Heart left ventricle (tissue), 16 donors: ENCODE measurements at regions of chr5 and their contacts with region 1.

Region 1: DNA sequence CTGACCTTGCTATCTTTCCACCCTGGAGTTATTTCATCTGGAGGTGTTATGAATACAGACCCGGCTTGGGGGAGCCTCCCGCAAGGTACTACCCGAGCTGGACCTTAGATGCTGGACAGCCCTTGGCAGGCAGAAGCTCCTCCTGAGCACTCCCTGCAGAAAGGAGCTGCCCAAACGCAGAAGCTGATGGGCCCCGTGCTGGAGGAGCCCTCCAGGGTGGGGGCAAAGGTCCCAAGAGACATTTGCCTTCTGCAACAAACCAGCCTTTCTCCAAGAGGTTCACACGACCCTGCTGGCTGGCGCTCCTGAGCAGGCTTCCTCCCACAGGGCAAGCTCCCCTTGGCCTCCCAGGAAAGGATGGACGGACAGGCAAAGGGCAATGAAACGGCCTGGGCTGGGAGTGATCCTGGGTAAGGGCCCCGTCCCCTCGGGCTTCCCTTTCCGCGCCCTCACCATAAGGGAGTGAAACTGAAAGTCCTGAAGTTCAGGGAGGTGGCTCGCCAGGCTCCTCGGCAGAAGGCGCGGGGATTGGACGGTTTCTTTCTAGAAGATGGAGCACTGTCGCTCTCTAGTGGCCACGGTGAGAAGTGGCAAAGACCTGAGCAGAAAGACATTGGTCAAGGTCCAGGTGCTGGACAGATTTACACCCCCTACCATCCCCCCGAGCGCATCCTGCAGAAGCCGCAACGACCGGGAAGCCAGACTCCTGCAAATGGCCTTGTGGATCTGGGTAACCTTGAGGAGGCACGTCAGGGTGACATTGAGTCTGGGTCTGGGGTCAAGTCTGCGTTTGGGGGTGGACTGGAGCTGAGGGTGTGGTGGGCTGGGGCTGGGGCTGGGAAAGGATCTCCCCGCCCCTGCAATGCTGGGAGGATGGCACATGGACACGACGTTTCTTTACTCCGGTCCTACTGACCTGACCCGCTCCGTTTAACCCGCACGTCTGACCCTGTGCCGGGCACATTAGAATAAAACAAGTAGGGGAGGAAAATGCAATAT is 56.4 kb downstream of the NEURL1B start:
- DNase-seq: peak; percentile 91 to 94 (median 92)
- ATAC-seq: peak; percentile 63 to 78 (median 68)
- H3K4me3 ChIP-seq: peak overlapping the region; percentile 21 to 70 (median 62)
- H3K27ac ChIP-seq: peak overlapping the region; percentile 53 to 94 (median 89)
- H3K4me1 ChIP-seq: peaks cover 5 to 74% (median 65%) of the 10 kb centered on the region in 12 donors
- H3K27me3 ChIP-seq: no peaks in the 10 kb centered on the region
- CTCF ChIP-seq: peak; percentile 80 to 96 (median 92)
- POLR2A ChIP-seq: peak in 1 of 2 donors; percentile 49

Region 2: GRCh38 chr5:172106511-172107356 is 590.7 kb before region 1 on chr5:
- intact Hi-C with region 1: loop called in 2 of 10 experiments (anchors 5 to 10 kb)
- DNase-seq: peak in 4 of 5 donors; percentile 42 to 82 (median 58)
- ATAC-seq: peak in 3 of 4 donors; percentile 21 to 27 (median 26)
- H3K4me3 ChIP-seq: peak overlapping the region in 9 of 12 donors; percentile 9 to 46 (median 29)
- H3K27ac ChIP-seq: peak overlapping the region in 1 of 12 donors; percentile 32
- H3K4me1 ChIP-seq: peaks cover 2 to 83% (median 55%) of the 10 kb centered on the region in 12 donors
- H3K27me3 ChIP-seq: no peaks in the 10 kb centered on the region
- CTCF ChIP-seq: peak; percentile 84 to 99 (median 90)
- POLR2A ChIP-seq: no peak

Region 3: GRCh38 chr5:172479044-172479783 is 218.2 kb before region 1 on chr5:
- intact Hi-C with region 1: loop called (anchors 1 to 2 kb)
- DNase-seq: peak; percentile 88 to 93 (median 89)
- ATAC-seq: peak; percentile 88 to 97 (median 96)
- H3K4me3 ChIP-seq: peak overlapping the region in 7 of 12 donors; percentile 8 to 39 (median 23)
- H3K27ac ChIP-seq: peak overlapping the region in 11 of 12 donors; percentile 31 to 81 (median 72)
- H3K4me1 ChIP-seq: peaks cover 0 to 27% (median 12%) of the 10 kb centered on the region in 12 donors
- H3K27me3 ChIP-seq: no peaks in the 10 kb centered on the region
- CTCF ChIP-seq: peak; percentile 75 to 97 (median 89)
- POLR2A ChIP-seq: no peak

Region 4: GRCh38 chr5:172583931-172584511 is 113.4 kb before region 1 on chr5:
- intact Hi-C with region 1: loop called in 3 of 10 experiments (anchors 5 to 10 kb)
- DNase-seq: peak; percentile 73 to 80 (median 79)
- ATAC-seq: peak; percentile 81 to 89 (median 86)
- H3K4me3 ChIP-seq: no peak overlapping the region
- H3K27ac ChIP-seq: peak overlapping the region; percentile 73 to 97 (median 87)
- H3K4me1 ChIP-seq: peaks cover 0 to 79% (median 49%) of the 10 kb centered on the region in 12 donors
- H3K27me3 ChIP-seq: no peaks in the 10 kb centered on the region
- CTCF ChIP-seq: no peak
- POLR2A ChIP-seq: no peak

Region 5: GRCh38 chr5:172640822-172641358 is 56.5 kb before region 1 on chr5 and contains the start of gene NEURL1B:
- intact Hi-C with region 1: loop called in 9 of 10 experiments (anchors 2 to 10 kb)
- DNase-seq: peak; percentile 81 to 91 (median 89)
- ATAC-seq: peak; percentile 68 to 88 (median 82)
- H3K4me3 ChIP-seq: peak within 1 kb of the TSS; percentile 73 to 98 (median 88)
- H3K27ac ChIP-seq: peak within 1 kb of the TSS; percentile 93 to 99 (median 98)
- H3K4me1 ChIP-seq: peaks cover 0 to 50% (median 26%) of the 10 kb centered on the region in 12 donors
- H3K27me3 ChIP-seq: peaks cover 0 to 11% (median 0%) of the 10 kb centered on the region in 9 donors
- CTCF ChIP-seq: peak in 7 of 12 donors; percentile 5 to 53 (median 29)
- POLR2A ChIP-seq: peak in 1 of 2 donors; percentile 59
- total RNA-seq, gene NEURL1B: 16.1 to 47.1 (median 25.8) TPM

Region 6: DNA sequence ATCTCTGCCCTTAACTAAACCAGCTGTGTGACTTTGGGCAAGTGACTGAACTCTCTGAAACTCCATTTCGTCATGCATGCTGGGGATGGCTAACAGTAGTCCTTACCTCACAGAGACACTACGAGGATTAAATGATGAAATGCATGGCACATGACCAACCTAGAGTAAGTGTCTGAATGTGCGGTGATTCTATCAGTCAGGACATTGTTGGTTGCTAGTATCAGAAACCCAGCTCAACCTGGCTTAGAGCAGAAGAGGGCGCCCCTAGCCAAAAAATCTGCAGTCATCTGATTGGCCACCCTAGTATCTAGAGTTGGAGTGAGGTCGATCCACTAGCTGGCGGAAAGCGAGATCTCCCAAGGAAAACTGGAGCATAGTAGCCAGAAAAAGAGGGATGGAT is 31.2 kb before region 1 on chr5:
- intact Hi-C with region 1: loop called in 5 of 10 experiments (anchors 2 to 5 kb)
- DNase-seq: no peak
- ATAC-seq: peak in 3 of 4 donors; percentile 46 to 64 (median 64)
- H3K4me3 ChIP-seq: no peak overlapping the region
- H3K27ac ChIP-seq: peak overlapping the region in 10 of 12 donors; percentile 17 to 89 (median 50)
- H3K4me1 ChIP-seq: peaks cover 8 to 89% (median 66%) of the 10 kb centered on the region in 12 donors
- H3K27me3 ChIP-seq: no peaks in the 10 kb centered on the region
- CTCF ChIP-seq: peak in 7 of 12 donors; percentile 17 to 47 (median 32)
- POLR2A ChIP-seq: no peak